ENCODE measurements at regions of chr4 and their contacts with region 1.

Region 1: DNA sequence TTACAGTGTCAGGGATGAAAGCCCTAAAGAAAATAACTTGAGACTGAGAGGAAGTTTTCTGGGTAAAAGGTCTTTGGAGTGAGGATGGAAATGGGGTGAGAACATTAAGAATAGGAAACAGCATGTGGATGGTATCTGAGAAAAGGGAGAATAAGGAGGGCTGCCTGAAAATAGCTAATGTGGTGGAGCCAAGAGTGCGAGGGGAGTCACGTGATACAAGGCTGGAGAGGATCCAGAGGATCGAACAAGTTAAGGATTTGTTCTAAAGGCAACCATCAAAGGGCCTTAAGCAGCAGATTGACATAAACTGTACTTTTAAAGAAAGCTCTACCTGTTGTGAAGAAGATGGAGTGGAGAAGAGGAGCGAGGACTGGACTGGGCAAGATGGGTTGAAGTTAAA is 347.4 kb upstream of the AGA start:
- DNase-seq: no peak
- ATAC-seq: no peak
- H3K4me3 ChIP-seq: no peak overlapping the region
- H3K27ac ChIP-seq: no peak overlapping the region
- H3K4me1 ChIP-seq: no peaks in the 10 kb centered on the region
- H3K27me3 ChIP-seq: no peaks in the 10 kb centered on the region

Region 2: GRCh38 chr4:177945268-177945667 is 155.7 kb after region 1 on chr4:
- intact Hi-C with region 1: loop called in 1 of 4 experiments (anchors 10 kb)
- DNase-seq: no peak
- ATAC-seq: no peak
- H3K4me3 ChIP-seq: no peak overlapping the region
- H3K27ac ChIP-seq: no peak overlapping the region
- H3K4me1 ChIP-seq: no peaks in the 10 kb centered on the region
- H3K27me3 ChIP-seq: no peaks in the 10 kb centered on the region

Region 3: DNA sequence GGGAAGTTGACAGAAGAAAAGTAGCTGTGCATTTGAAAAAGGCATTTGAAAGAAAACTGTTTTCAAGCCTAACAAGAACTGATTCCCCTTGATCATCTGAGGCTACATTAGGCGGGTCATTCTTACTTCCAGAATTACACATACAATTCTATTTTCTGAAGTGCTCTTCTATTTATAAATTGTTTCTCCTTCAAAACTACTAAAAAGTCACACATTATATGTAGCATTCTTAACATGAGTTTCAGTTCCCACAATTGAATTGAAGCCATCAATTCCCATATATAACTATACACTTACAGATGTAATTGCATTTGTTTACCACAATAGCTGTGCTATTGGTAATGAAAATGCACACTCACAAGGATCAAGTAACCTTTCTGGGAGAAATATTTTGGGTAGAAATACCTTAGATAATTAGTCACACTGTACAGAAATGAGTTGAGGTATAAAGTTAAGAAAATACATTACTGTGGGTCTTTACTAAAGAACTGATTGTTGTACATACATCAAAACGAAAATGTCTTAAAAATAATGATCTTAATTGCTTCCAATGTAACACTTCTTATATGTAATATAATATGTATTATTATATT is 1340.6 kb after region 1 on chr4:
- intact Hi-C with region 1: loop called in 1 of 4 experiments (anchors 10 kb)
- DNase-seq: no peak
- ATAC-seq: no peak
- H3K4me3 ChIP-seq: no peak overlapping the region
- H3K27ac ChIP-seq: no peak overlapping the region
- H3K4me1 ChIP-seq: no peaks in the 10 kb centered on the region
- H3K27me3 ChIP-seq: no peaks in the 10 kb centered on the region

Measured in right cardiac atrium (tissue), 5 donors.